Activated CD4-positive, alpha-beta memory T cell treated with anti-CD3 and anti-CD28 coated beads, Interleukin-2, amount 10 ng/mL, durations not matched to agents 7 days and 5 days (primary cell): ENCODE measurements at regions of chrX and their contacts with region 1.

Region 1: DNA sequence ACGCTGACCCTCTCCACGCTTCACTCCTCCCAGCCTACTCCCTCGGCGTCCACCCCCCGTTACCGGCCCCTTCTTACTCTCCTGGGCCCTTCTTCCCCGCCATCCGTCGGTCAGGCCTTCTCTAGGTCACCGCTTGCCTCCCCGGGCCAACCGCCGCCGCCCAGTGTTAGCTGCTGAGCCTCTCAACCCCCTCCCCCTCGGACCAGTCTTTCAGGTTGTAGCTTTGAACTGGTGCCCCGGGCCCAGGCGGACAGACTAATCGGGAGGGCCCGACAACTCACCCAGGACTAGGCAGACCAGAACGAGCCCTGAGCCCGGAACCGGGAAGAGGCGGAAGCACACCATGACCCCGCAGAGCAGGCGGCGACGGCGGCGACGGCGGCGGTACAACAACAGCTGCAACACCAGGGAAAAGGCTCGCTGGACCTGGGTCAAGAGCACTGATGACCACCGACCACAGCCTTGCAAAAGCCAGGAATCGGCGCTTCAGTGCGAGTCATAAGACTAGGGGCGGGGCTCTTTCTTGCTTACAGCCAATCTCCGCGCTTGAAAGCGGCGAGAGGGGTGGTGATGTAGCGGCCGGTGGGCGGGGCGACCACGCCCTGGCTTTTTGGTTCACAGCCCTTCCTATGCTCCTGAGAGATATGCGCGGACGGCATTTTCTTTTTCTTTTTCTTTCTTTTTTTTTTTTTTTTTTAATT is at the start of gene LAMP2:
- DNase-seq: peak; percentile 86
- H3K4me3 Mint-ChIP-seq: peak within 1 kb of the TSS; percentile 91
- H3K27ac Mint-ChIP-seq: peak within 1 kb of the TSS; percentile 86
- H3K4me1 Mint-ChIP-seq: peaks cover 22% of the 10 kb centered on the region
- H3K27me3 Mint-ChIP-seq: peaks cover 2% of the 10 kb centered on the region
- total RNA-seq, gene LAMP2: 59.4 to 60.3 TPM

Region 2: GRCh38 chrX:120457766-120458180 is 11.2 kb before region 1 on chrX:
- CTCF ChIA-PET with region 1: no interaction called
- POLR2A ChIA-PET with region 1: interaction called, 19 read pairs
- DNase-seq: no peak
- H3K4me3 Mint-ChIP-seq: no peak overlapping the region
- H3K27ac Mint-ChIP-seq: peak overlapping the region; percentile 69
- H3K4me1 Mint-ChIP-seq: peaks cover 50% of the 10 kb centered on the region
- H3K27me3 Mint-ChIP-seq: no peaks in the 10 kb centered on the region